Posterior cingulate gyrus (tissue), 11 donors: ENCODE measurements at regions of chr16 and their contacts with region 1.

Region 1: DNA sequence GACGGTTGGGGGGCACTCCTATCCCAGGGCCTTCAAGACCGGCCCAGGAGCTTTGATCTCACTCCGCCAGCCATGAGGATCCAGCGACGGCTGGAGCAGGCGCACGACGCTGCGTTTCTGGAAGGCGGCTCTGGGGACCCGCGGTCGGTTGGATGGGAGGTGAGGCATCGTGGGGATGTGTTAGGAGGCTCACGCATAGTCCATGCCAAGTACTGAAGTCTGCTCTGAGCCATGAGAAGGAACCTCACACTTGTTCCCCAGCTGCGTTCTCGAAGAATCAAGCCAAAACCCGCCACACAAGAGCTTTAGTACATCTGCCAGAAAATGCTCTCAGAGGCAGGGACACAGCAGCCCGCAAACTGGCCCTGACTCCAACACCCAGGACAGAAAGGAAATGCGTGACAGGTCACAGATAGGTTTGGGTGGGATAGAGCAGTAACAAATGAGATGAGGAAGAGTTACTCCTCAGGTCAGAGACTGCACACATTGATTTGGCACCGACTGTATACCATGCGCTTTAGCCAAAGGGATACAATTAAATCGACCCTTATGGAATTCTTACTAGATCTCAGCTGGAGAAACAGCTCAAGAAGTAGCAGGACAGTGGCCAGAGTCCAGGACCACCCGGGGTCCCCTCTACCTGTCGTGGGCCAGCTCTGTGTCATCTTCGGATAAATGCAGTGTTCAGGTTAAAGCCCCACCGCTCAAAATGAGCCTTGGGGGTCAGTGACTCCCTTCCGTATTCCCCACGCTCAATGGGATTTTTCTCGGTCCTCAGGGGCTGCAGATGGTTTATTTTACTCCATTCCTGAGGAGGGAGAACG is 6.7 kb upstream of the GSG1L start:
- DNase-seq: peak in 4 of 10 donors; percentile 34 to 88 (median 73)

Region 2: DNA sequence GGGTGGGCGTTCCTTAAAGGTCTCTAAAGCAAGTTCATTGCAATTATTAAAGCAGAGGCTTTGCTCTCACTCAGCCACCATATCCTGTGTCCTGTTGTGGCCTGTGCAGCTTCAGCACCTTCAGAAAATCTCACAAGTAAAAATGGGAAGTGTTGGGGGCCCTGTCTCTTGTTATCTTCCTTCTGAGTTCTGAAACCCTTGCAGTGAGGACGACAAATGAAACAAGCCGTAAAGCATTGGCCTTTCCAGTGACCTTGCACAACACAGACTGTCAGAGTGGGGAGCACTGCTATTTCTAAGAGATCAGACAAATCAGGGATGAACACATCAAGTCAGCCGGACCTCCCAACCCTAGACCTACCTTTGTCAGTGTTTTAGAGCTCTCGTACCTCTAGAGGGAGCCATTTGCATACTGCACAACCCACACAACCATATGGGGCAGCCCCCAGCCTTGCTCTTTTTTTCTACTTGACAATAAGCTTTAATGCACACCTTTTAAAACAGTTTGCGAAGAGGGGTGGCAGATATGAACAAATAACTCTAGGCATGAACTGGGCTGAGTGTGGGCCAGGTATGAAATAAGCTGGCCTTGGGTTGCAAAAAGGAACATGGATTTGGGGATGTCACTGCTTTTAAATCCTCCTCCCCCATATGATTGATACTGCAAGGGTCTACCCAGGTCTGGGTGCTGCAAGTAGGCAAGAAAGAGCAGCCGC is 430.5 kb before region 1 on chr16:
- intact Hi-C with region 1: loop called (anchors 1 kb)
- DNase-seq: peak in 4 of 10 donors; percentile 24 to 38 (median 32)

Region 3: GRCh38 chr16:27689711-27690110 is 380.5 kb before region 1 on chr16:
- intact Hi-C with region 1: loop called (anchors 2 kb)
- DNase-seq: peak in 5 of 10 donors; percentile 36 to 91 (median 56)

Region 4: DNA sequence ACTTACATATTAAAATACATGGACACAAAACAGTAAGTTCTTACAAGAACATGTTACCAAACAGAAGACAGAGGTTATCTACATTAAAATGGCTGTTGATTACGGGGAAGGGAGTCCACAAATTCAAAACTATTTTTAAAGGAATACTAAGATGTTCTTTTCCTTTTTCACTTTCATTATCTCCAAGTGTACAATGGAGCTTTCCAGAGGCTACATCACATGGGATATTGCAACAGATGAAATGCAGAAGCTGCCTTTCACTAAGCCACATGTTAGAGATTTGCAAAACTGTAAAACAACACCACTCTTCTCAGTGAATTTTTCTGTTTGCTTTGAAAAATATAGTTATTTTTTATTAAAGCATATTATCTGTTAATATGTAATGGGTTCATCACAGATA is 88.0 kb after region 1 on chr16:
- intact Hi-C with region 1: no loop called
- DNase-seq: no peak

Region 5: GRCh38 chr16:28504707-28505409 is 434.7 kb after region 1 on chr16:
- intact Hi-C with region 1: no loop called
- DNase-seq: no peak